H1 (cell line): ENCODE measurements at regions of chr20 and their contacts with region 1.

Region 1: GRCh38 chr20:10357974-10358373 is 76.0 kb downstream of the MKKS start:
- DNase-seq: no peak
- H3K4me3 ChIP-seq: no peak overlapping the region
- H3K27ac ChIP-seq: no peak overlapping the region
- H3K4me1 ChIP-seq: peaks cover 0 to 6% (median 1%) of the 10 kb centered on the region in 4 experiments; a peak in 3 of 7 replicates
- H3K27me3 ChIP-seq: no peaks in the 10 kb centered on the region; a peak in 1 of 7 replicates
- CTCF ChIP-seq: peak in 2 of 3 experiments; percentile 29 to 41; a peak in 2 of 4 replicates
- EP300 ChIP-seq: no peak
- POLR2A ChIP-seq: no peak
- RAD21 ChIP-seq: peak; percentile 54 to 71

Region 2: DNA sequence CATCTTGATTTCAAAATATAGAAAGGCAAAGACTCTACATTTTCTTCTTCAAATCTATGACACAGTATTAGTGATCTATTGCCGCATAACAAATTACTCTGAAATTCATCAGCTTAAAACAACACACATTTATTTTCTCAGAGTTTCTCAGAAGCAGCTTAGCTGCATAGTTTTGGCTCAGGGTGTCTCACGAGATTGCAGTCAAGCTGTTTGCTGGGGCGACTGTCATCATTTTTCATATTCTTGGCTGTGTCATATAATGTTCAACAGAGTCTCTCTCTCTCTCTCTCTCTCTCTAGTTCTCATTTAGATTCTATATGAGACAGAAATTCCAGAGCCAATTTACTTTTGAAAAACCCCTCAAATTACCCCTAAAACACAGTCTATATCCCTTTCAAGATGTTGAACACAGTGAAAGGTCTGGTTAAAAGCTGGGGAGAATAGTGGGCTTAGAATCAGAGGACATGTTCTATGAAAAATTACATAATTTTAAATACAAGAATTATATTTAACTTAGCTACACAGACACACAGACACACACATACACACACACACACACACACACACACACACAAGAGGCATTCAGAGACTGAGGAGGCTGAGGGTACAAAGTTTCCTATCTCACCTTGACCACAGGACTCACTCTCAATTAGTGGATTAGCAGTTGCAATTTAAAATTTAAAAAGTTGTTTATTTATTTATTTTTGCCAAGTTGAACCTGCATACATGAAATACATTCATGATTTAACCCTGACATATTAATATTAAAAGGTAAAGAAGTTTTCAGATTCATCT is 10.7 kb before region 1 on chr20:
- CTCF ChIA-PET with region 1: interaction called, 10 read pairs
- POLR2A ChIA-PET with region 1: no interaction called
- DNase-seq: no peak
- H3K4me3 ChIP-seq: no peak overlapping the region
- H3K27ac ChIP-seq: no peak overlapping the region
- H3K4me1 ChIP-seq: peaks cover 4 to 8% (median 7%) of the 10 kb centered on the region in 4 experiments; a peak in 5 of 7 replicates
- H3K27me3 ChIP-seq: no peaks in the 10 kb centered on the region
- CTCF ChIP-seq: no peak
- EP300 ChIP-seq: no peak
- POLR2A ChIP-seq: no peak
- RAD21 ChIP-seq: no peak